SK-N-SH (cell line): ENCODE measurements at regions of chr2 and their contacts with region 1.

Region 1: GRCh38 chr2:238784671-238785527 is 63.0 kb upstream of the TWIST2 start:
- DNase-seq: peak; percentile 79
- H3K4me3 ChIP-seq: peak overlapping the region in 1 of 2 experiments; percentile 6; a peak in 1 of 4 replicates
- H3K27ac ChIP-seq: no peak overlapping the region
- H3K4me1 ChIP-seq: no peaks in the 10 kb centered on the region
- H3K27me3 ChIP-seq: no peaks in the 10 kb centered on the region
- CTCF ChIP-seq: peak; percentile 93
- EP300 ChIP-seq: no peak
- RAD21 ChIP-seq: peak; percentile 90

Region 2: DNA sequence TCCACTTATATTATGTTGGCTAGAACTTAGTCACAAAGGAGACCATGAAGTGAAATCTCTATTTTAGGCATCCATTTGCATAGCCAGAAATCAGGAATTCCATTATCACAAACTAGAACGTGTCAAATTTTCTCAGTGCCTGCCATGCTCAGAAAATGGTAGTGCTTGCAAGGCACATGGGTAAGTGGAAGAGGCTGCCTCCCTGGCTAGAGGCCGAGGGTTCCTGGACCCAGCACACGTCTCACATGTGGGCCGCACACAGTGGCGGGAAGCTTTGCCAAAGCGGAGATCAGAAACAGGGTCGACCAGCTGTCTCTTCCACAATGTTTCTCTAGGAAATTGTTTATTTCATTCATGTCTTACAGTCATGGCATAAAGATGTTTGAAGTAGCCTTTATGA is 422.3 kb before region 1 on chr2:
- CTCF ChIA-PET with region 1: interaction called, 35 read pairs
- POLR2A ChIA-PET with region 1: no interaction called
- DNase-seq: no peak
- H3K4me3 ChIP-seq: no peak overlapping the region
- H3K27ac ChIP-seq: no peak overlapping the region
- H3K4me1 ChIP-seq: peaks cover 0 to 4% of the 10 kb centered on the region in 2 experiments; a peak in 1 of 4 replicates
- H3K27me3 ChIP-seq: no peaks in the 10 kb centered on the region
- CTCF ChIP-seq: no peak
- EP300 ChIP-seq: no peak
- RAD21 ChIP-seq: no peak

Region 3: DNA sequence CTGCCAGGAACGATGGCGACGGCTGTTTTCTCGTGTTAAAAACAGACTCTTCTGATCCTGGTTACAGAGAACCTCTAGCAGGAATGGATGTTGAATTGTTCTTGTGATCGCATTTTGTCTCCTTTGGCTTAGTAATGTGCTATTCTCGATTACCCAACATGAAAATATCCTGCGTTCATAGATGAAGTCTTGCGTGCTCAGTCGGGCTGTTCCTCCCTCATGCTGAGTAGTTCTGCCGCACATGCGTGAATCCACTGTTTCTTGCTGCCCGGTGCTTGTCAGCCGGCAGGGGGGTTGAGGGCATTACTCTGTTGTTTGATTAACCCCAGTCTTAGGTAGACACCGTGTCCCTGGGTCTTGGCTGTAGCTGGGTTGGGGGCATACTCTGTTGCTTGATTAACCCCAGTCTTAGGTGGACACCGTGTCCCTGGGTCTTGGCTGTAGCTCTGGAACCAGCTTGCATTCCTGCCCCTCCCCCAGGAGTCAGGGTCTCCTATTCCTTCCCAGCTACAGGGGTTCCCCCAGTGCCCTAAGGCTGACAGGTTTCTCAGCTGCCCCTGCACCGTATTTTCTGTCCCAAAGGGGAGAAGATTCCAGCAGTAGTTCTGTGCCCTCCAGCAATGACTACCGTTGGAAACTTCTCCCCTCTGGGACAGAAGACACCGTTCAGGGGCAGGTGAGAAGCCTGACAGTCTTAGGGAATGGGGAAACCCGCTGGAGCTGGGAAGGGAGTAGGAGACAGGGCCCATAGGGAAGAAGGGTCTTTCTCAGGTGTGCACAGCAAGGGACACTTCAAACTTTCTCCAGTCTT is 380.3 kb before region 1 on chr2:
- CTCF ChIA-PET with region 1: no interaction called
- POLR2A ChIA-PET with region 1: no interaction called
- DNase-seq: no peak
- H3K4me3 ChIP-seq: no peak overlapping the region
- H3K27ac ChIP-seq: no peak overlapping the region
- H3K4me1 ChIP-seq: peaks cover 0 to 2% of the 10 kb centered on the region in 2 experiments; a peak in 1 of 4 replicates
- H3K27me3 ChIP-seq: no peaks in the 10 kb centered on the region
- CTCF ChIP-seq: no peak
- EP300 ChIP-seq: no peak
- RAD21 ChIP-seq: no peak

Region 4: GRCh38 chr2:238513346-238513745 is 271.6 kb before region 1 on chr2:
- CTCF ChIA-PET with region 1: interaction called, 40 read pairs
- POLR2A ChIA-PET with region 1: no interaction called
- DNase-seq: peak; percentile 63
- H3K4me3 ChIP-seq: no peak overlapping the region
- H3K27ac ChIP-seq: no peak overlapping the region
- H3K4me1 ChIP-seq: no peaks in the 10 kb centered on the region; a peak in 1 of 4 replicates
- H3K27me3 ChIP-seq: no peaks in the 10 kb centered on the region
- CTCF ChIP-seq: peak; percentile 70
- EP300 ChIP-seq: no peak
- RAD21 ChIP-seq: peak; percentile 59

Region 5: DNA sequence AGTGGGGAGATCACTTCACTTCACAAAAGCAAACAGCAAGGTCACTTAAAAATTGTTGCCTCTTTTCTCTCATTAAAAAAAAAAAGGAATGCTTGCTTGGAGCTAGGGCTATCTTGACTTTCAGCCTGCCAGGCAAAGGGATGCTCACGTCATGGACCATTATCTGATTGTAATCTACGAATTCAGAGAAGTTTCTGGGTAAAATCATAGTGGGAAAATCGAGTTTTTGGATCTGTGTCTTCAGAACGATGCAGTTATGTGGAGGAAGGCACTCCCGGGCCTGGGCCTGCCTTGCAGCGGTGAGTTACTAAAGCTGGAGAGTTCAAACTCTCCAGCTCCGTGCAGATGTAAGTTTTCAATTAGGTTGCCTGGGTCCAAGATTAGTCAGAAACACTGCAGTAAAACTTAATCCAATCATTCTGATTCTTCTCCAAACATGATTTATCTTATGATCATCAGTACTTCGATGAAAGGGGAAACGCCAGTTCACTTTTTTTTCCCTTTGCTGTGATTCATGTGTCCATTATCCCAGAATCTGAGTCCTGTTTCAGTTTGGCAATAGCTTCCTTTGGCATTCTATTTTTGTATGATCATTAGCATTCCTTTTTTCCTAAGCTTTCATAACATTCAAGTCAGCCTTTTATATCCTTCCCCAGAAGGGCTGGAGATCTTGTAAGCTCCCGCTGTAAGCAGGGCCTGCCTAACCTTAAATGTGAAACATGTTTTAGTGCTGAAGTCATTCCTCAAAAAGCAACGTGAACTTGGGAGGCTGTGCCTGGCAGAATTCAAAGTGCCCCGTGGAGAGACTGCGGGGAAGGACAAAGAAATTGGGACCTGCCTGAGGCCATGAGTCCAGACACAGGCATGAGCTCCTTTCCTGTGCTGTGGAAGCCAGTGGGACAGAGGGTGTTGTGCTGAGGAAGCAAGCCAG is 56.3 kb before region 1 on chr2:
- CTCF ChIA-PET with region 1: interaction called, 10 read pairs
- POLR2A ChIA-PET with region 1: no interaction called
- DNase-seq: peak; percentile 34
- H3K4me3 ChIP-seq: no peak overlapping the region
- H3K27ac ChIP-seq: peak overlapping the region in 1 of 2 experiments; percentile 90; a peak in 2 of 4 replicates
- H3K4me1 ChIP-seq: peaks cover 6 to 10% of the 10 kb centered on the region in 2 experiments; a peak in 1 of 4 replicates
- H3K27me3 ChIP-seq: no peaks in the 10 kb centered on the region
- CTCF ChIP-seq: no peak
- EP300 ChIP-seq: peak; percentile 81 to 91
- RAD21 ChIP-seq: no peak

Region 6: GRCh38 chr2:238796223-238796885 is 11.5 kb after region 1 on chr2:
- CTCF ChIA-PET with region 1: interaction called, 34 read pairs
- POLR2A ChIA-PET with region 1: no interaction called
- DNase-seq: no peak
- H3K4me3 ChIP-seq: no peak overlapping the region
- H3K27ac ChIP-seq: no peak overlapping the region
- H3K4me1 ChIP-seq: no peaks in the 10 kb centered on the region
- H3K27me3 ChIP-seq: no peaks in the 10 kb centered on the region; the same call in 1 of the 2 replicates
- CTCF ChIP-seq: no peak
- EP300 ChIP-seq: no peak
- RAD21 ChIP-seq: no peak